ENCODE measurements at regions of chr2 and their contacts with region 1.

Region 1: GRCh38 chr2:72150157-72150865 is 2.6 kb upstream of the CYP26B1 start:
- DNase-seq: peak; percentile 83 to 92
- H3K4me3 ChIP-seq: peak overlapping the region; percentile 45
- H3K4me3 Mint-ChIP-seq: peak overlapping the region; percentile 65
- H3K27ac Mint-ChIP-seq: no peak overlapping the region
- H3K4me1 ChIP-seq: peaks cover 40% of the 10 kb centered on the region
- H3K4me1 Mint-ChIP-seq: peaks cover 8% of the 10 kb centered on the region
- H3K27me3 ChIP-seq: peaks cover 16% of the 10 kb centered on the region
- H3K27me3 Mint-ChIP-seq: peaks cover 28% of the 10 kb centered on the region
- CTCF ChIP-seq: peak; percentile 80 to 82

Region 2: DNA sequence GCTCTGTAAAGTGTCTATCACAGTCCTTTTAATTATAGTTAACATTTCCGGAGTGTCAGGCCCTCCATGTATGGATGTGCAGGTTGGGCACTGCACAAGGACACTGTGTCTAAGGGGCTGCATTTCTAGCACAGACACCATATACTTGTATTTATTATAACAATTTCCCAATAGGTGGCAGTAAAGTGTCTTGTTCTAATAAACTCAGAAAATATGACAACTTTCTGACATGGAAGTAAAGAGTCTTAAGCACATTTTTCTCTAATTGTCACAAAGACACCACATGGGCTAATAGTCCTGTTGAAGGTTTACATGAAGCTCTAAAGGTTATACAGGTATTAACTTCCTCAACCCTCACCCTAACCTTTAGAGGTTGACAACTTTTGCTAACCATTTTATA is 540.4 kb before region 1 on chr2:
- CTCF ChIA-PET with region 1: interaction called, 3 read pairs
- POLR2A ChIA-PET with region 1: no interaction called
- intact Hi-C with region 1: loop called (anchors 5 kb)
- DNase-seq: no peak
- H3K4me3 ChIP-seq: no peak overlapping the region
- H3K4me3 Mint-ChIP-seq: no peak overlapping the region
- H3K27ac Mint-ChIP-seq: no peak overlapping the region
- H3K4me1 ChIP-seq: no peaks in the 10 kb centered on the region
- H3K4me1 Mint-ChIP-seq: no peaks in the 10 kb centered on the region
- H3K27me3 ChIP-seq: no peaks in the 10 kb centered on the region; the same call in 1 of the 2 replicates
- H3K27me3 Mint-ChIP-seq: peaks cover 8% of the 10 kb centered on the region
- CTCF ChIP-seq: peak in 1 of 2 experiments; percentile 53

Region 3: GRCh38 chr2:71873594-71873993 is 276.7 kb before region 1 on chr2:
- CTCF ChIA-PET with region 1: interaction called, 3 read pairs
- POLR2A ChIA-PET with region 1: no interaction called
- intact Hi-C with region 1: loop called (anchors 5 kb)
- DNase-seq: no peak
- H3K4me3 ChIP-seq: no peak overlapping the region
- H3K4me3 Mint-ChIP-seq: no peak overlapping the region
- H3K27ac Mint-ChIP-seq: no peak overlapping the region
- H3K4me1 ChIP-seq: no peaks in the 10 kb centered on the region
- H3K4me1 Mint-ChIP-seq: no peaks in the 10 kb centered on the region
- H3K27me3 ChIP-seq: no peaks in the 10 kb centered on the region
- H3K27me3 Mint-ChIP-seq: peaks cover 26% of the 10 kb centered on the region
- CTCF ChIP-seq: no peak

Region 4: GRCh38 chr2:71933467-71934319 is 216.6 kb before region 1 on chr2:
- CTCF ChIA-PET with region 1: interaction called, 20 read pairs
- POLR2A ChIA-PET with region 1: no interaction called
- intact Hi-C with region 1: no loop called
- DNase-seq: peak; percentile 47 to 53
- H3K4me3 ChIP-seq: no peak overlapping the region
- H3K4me3 Mint-ChIP-seq: no peak overlapping the region
- H3K27ac Mint-ChIP-seq: no peak overlapping the region
- H3K4me1 ChIP-seq: no peaks in the 10 kb centered on the region
- H3K4me1 Mint-ChIP-seq: no peaks in the 10 kb centered on the region
- H3K27me3 ChIP-seq: no peaks in the 10 kb centered on the region
- H3K27me3 Mint-ChIP-seq: peaks cover under 1% of the 10 kb centered on the region
- CTCF ChIP-seq: peak; percentile 30 to 65

Region 5: DNA sequence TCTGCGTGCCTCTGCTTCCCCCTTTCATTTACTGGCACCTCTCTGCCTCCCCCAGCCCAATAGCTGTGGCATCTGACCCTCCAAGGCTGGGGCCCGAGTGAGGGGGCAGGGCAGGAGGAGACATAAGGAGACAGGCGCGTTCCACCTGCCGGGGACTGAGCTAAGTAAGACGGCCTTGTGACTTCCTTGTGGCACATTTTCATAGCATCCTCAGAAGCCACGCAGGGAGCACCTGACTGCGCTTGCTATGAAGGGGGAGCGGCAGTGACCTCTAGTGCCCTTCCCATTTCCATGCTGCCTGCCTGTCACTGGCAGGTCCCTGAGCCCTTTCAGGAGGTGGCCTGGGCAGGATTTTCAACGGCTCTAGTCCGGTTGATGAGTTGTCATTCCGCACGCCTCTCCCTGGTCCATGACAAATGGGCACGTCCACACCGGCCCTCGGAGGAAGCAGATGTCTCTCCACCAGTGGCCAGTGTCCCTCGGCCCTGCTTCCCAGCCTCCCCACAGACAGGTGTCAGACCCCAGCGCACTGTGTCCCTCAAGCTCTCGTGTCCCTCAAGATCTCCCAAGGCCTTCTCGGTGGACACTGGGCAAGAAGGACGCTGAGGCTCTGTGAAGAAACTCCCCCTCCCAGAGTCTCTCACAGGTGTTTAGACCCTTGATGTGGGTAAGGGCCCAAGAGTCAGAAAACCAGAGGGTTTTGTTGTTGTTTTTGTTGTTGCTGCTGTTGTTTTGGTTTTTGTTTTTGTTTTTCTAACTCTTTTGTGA is 45.3 kb before region 1 on chr2:
- CTCF ChIA-PET with region 1: no interaction called
- POLR2A ChIA-PET with region 1: no interaction called
- intact Hi-C with region 1: loop called (anchors 2 kb)
- DNase-seq: peak; percentile 28 to 38
- H3K4me3 ChIP-seq: no peak overlapping the region
- H3K4me3 Mint-ChIP-seq: no peak overlapping the region
- H3K27ac Mint-ChIP-seq: no peak overlapping the region
- H3K4me1 ChIP-seq: no peaks in the 10 kb centered on the region
- H3K4me1 Mint-ChIP-seq: no peaks in the 10 kb centered on the region
- H3K27me3 ChIP-seq: no peaks in the 10 kb centered on the region
- H3K27me3 Mint-ChIP-seq: peaks cover 18% of the 10 kb centered on the region
- CTCF ChIP-seq: peak; percentile 12 to 41

Region 6: DNA sequence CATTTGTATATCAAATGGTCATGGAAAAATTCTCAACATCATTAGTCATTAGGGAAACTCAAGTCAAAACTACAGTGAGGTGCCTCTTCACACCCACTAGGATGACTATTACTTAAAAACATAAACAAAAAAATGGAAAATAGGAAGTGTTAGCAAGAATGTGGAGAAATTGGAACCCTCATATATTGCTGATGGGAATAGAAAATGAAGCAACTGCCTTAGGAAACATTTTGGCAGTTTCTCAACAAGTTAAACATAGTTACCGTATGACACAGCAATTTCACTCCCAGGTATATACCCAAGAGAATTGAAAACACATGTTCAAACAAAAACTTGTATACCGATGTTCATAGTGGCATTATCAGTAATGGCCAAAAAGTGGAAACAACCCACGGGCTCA is 15.5 kb after region 1 on chr2:
- CTCF ChIA-PET with region 1: no interaction called
- POLR2A ChIA-PET with region 1: no interaction called
- intact Hi-C with region 1: no loop called
- DNase-seq: no peak
- H3K4me3 ChIP-seq: no peak overlapping the region
- H3K4me3 Mint-ChIP-seq: no peak overlapping the region
- H3K27ac Mint-ChIP-seq: no peak overlapping the region
- H3K4me1 ChIP-seq: no peaks in the 10 kb centered on the region
- H3K4me1 Mint-ChIP-seq: no peaks in the 10 kb centered on the region
- H3K27me3 ChIP-seq: no peaks in the 10 kb centered on the region
- H3K27me3 Mint-ChIP-seq: peaks cover 7% of the 10 kb centered on the region
- CTCF ChIP-seq: no peak

Region 7: GRCh38 chr2:72745679-72746368 is 595.5 kb after region 1 on chr2:
- CTCF ChIA-PET with region 1: interaction called, 7 read pairs
- POLR2A ChIA-PET with region 1: no interaction called
- intact Hi-C with region 1: loop called (anchors 1 kb)
- DNase-seq: peak in 1 of 2 experiments; percentile 66
- H3K4me3 ChIP-seq: no peak overlapping the region
- H3K4me3 Mint-ChIP-seq: no peak overlapping the region
- H3K27ac Mint-ChIP-seq: no peak overlapping the region
- H3K4me1 ChIP-seq: peaks cover 18% of the 10 kb centered on the region
- H3K4me1 Mint-ChIP-seq: no peaks in the 10 kb centered on the region
- H3K27me3 ChIP-seq: no peaks in the 10 kb centered on the region
- H3K27me3 Mint-ChIP-seq: no peaks in the 10 kb centered on the region
- CTCF ChIP-seq: peak; percentile 73 to 77